Astrocyte of the cerebellum (primary cell): ENCODE measurements at regions of chr11 and their contacts with region 1.

Region 1: DNA sequence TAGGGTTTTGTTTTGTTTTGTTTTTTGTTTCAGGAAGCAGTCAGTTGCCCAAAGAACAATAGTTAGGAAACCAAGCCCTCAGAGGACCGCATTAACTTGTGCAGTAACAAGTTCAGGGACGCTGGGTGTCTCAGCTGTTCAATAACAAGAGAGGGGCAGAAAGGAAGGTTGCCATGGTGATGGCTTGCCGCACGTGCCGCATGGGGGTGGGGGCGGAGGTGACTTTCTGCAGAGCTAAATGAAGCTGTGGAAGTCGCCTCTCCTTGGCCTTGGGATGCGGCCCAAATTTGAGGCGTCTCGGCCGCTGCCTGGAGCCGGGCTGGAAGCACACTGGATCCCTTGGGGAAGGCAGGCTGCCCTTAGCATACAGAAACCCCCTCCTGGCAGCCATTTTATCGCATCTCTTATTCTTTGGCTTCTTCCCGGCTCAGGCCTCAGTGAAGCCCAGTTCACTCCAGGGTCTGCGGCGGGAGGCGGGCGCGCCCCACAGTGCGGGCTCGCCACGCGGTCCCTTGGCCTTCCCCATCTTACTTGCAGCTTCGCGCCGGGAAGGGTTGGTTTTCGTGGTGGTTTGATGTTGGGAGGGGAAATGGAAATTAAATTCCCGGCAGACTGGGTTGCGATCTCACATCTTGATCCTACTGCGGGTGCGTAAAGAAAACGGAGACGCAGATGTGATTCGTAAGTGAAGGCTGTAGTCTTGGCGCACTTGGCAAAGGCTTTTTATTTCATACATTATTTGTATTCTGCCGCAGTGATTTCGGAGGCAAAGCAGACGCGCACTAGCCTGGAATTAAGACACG is 94.3 kb downstream of the SLC17A6 start:
- DNase-seq: peak; percentile 12
- H3K4me3 ChIP-seq: peak overlapping the region; percentile 43
- CTCF ChIP-seq: no peak

Region 2: DNA sequence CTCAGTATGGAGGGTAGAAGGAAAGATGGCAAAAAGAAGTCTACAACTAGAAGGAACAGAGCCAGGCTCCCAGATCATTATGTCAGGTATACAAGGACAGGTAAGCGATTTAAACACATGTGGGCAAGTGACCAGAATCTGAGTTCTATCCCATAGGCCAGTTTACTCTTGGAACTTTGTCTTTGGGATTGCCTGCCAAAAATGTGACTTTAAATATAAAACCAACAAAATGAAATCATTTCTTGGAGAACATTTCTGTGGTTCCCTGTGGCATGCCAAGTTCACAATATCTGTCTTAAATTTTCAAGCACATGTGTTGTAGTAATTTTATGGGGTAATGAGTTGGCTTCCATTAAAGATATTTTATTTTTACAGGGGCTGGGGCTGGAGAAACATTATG is 46.7 kb after region 1 on chr11:
- in situ Hi-C with region 1: no loop called
- DNase-seq: peak; percentile 55
- H3K4me3 ChIP-seq: no peak overlapping the region
- CTCF ChIP-seq: no peak

Region 3: GRCh38 chr11:22521226-22521625 is 88.7 kb after region 1 on chr11:
- in situ Hi-C with region 1: no loop called
- DNase-seq: peak; percentile 59
- H3K4me3 ChIP-seq: no peak overlapping the region
- CTCF ChIP-seq: no peak

Region 4: DNA sequence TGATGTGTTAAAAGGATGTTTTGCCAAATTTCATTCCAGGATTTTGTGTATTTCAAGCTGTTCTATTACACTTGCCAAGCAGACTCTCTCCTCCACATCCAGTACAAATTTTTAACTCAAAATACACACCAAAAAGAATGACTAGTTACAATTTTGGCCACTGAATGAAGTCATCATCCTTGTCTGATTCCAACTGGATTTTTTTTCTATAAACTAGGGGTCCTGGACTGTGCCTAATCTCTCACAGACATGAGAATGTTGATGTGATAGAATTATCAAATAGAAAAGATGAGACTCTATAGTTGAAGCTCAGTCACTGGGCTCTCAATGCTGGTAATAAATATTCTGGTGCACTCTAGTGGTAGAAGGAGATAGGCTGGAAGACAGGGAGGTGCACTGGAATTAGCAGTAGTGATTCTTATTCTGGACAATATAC is 107.3 kb after region 1 on chr11:
- in situ Hi-C with region 1: loop called (anchors 5 kb)
- DNase-seq: peak; percentile 18
- H3K4me3 ChIP-seq: no peak overlapping the region
- CTCF ChIP-seq: peak; percentile 76

Region 5: GRCh38 chr11:22599458-22599857 is 167.0 kb after region 1 on chr11:
- in situ Hi-C with region 1: no loop called
- DNase-seq: no peak
- H3K4me3 ChIP-seq: no peak overlapping the region
- CTCF ChIP-seq: no peak

Region 6: DNA sequence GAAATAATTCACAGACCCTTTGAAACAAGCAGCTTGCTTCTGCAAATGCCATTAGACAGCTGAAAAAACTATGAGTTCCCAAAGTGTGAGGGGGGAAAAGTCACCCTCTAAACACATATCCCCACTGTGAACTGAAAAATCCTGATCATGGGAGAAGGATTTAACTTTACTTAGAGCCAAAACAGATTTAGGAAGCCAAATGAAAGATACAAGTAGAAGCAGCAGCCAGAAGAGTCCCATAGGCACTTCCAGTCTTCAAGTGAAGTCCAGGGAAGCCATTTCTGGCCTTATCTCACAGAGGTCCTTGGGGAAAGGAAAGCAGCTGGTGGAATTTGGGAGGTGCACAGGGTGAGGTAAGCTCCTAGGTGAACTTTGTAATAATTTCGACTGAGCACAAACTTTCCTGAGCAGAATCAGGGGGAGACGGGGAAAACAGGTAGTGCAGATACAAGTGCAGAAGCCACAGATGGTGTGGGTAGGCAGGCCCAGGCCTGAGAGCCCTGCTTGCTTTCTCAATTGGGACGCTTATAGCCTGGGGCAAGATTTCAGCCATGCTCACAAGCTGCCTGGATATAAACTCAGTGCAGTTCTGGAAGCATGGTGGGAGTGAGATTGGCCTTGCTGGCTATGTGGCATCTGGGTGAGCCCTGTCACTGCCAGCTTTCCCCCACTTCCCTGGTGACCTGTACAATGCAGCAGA is 278.7 kb after region 1 on chr11:
- in situ Hi-C with region 1: no loop called
- DNase-seq: no peak
- H3K4me3 ChIP-seq: no peak overlapping the region
- CTCF ChIP-seq: no peak